Panc1 (cell line): ENCODE measurements at regions of chr11 and their contacts with region 1.

Region 1: DNA sequence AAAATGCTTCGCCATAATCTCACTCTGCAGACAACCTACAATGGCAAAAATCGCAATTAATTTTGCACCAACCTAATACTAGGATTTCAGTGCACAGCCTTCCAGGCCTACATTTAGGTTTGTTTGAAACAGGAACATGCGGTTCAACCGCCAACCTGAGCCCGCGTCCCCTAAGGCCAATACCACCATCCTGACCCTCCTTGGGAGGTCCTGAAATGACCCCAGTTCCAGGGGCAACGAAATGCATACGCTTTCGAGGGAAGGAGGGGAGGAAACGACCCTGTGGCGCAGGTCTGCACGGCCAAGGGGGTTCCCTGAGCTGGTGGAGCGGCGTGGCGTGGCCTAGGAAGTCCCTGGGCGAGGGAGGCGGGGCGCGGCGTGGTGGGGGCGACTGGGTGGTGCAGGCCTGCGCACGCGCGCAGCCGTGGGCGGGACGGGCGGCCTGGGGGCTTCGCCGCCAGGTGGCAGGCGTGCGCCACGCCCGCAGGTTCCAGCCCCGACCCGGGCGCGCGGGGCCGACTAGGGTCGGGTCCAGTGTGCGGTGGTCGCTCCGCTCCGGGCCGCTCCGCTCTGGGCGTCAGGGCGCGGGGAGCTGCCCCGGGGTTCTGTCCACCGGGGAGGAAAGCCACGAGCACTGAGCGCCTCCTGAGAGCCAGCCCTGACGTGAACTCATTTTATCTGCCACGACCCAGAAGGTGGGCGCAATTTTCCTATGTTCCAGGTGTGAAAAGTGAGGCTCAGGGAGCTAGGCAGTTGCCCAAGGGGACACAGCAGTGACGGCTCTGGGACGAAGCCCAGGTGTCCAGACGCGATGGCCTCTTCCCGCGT is 94.1 kb downstream of the SWAP70 start:
- DNase-seq: peak; percentile 38
- ATAC-seq: peak; percentile 66
- H3K4me3 ChIP-seq: peak overlapping the region; percentile 51 to 81
- H3K27ac ChIP-seq: peak overlapping the region; percentile 100
- H3K4me1 ChIP-seq: peaks cover 85% of the 10 kb centered on the region
- H3K27me3 ChIP-seq: no peaks in the 10 kb centered on the region
- CTCF ChIP-seq: peak; percentile 100

Region 2: GRCh38 chr11:9861860-9862725 is 104.1 kb after region 1 on chr11:
- CTCF ChIA-PET with region 1: interaction called, 3 read pairs
- POLR2A ChIA-PET with region 1: no interaction called
- in situ Hi-C with region 1: no loop called
- intact Hi-C with region 1: loop called (anchors 5 kb)
- DNase-seq: peak; percentile 74
- ATAC-seq: peak; percentile 91
- H3K4me3 ChIP-seq: no peak overlapping the region
- H3K27ac ChIP-seq: peak overlapping the region; percentile 96
- H3K4me1 ChIP-seq: peaks cover 56% of the 10 kb centered on the region
- H3K27me3 ChIP-seq: no peaks in the 10 kb centered on the region
- CTCF ChIP-seq: peak; percentile 97

Region 3: DNA sequence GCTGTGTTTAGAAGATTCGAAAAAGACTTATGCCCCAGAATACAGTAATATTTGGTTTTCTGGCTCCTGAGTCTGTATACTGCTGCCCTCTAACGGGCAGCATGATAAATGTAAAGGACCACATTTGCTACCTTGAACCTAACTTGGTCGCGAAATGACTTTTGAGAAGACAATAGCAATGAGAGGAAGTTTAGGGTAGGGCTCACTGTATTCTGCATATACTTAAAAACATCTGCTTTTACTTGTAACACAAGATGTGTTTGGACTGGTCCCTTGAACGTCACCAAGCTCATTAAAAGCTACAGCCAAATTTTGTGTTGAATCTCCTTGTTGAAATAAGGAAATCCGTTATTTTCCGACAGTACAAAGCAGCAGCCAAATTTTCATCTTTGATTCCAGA is 215.0 kb after region 1 on chr11:
- CTCF ChIA-PET with region 1: no interaction called
- POLR2A ChIA-PET with region 1: no interaction called
- in situ Hi-C with region 1: no loop called
- intact Hi-C with region 1: loop called (anchors 5 kb)
- DNase-seq: peak; percentile 53
- ATAC-seq: peak; percentile 72
- H3K4me3 ChIP-seq: no peak overlapping the region
- H3K27ac ChIP-seq: peak overlapping the region; percentile 76
- H3K4me1 ChIP-seq: 0 out of 2 replicates have a peak, but pooled peaks cover 3% of the 10 kb centered on the region
- H3K27me3 ChIP-seq: no peaks in the 10 kb centered on the region
- CTCF ChIP-seq: peak; percentile 85; the same call in 1 of the 2 replicates

Region 4: GRCh38 chr11:10197091-10197490 is 439.1 kb after region 1 on chr11:
- CTCF ChIA-PET with region 1: no interaction called
- POLR2A ChIA-PET with region 1: no interaction called
- in situ Hi-C with region 1: no loop called
- intact Hi-C with region 1: loop called (anchors 10 kb)
- DNase-seq: no peak
- ATAC-seq: no peak
- H3K4me3 ChIP-seq: no peak overlapping the region
- H3K27ac ChIP-seq: no peak overlapping the region
- H3K4me1 ChIP-seq: no peaks in the 10 kb centered on the region
- H3K27me3 ChIP-seq: no peaks in the 10 kb centered on the region
- CTCF ChIP-seq: no peak

Region 5: GRCh38 chr11:10322830-10323792 is 565.1 kb after region 1 on chr11:
- CTCF ChIA-PET with region 1: no interaction called
- POLR2A ChIA-PET with region 1: interaction called, 4 read pairs
- in situ Hi-C with region 1: no loop called
- intact Hi-C with region 1: loop called (anchors 5 kb)
- DNase-seq: peak; percentile 90
- ATAC-seq: peak; percentile 82
- H3K4me3 ChIP-seq: peak overlapping the region in 1 of 2 experiments; percentile 36; a peak in 2 of 4 replicates
- H3K27ac ChIP-seq: peak overlapping the region; percentile 90
- H3K4me1 ChIP-seq: peaks cover 83% of the 10 kb centered on the region
- H3K27me3 ChIP-seq: no peaks in the 10 kb centered on the region
- CTCF ChIP-seq: peak; percentile 83

Region 6: GRCh38 chr11:11291041-11292015 is 1533.3 kb after region 1 on chr11:
- CTCF ChIA-PET with region 1: no interaction called
- POLR2A ChIA-PET with region 1: no interaction called
- in situ Hi-C with region 1: no loop called
- intact Hi-C with region 1: no loop called
- DNase-seq: no peak
- ATAC-seq: no peak
- H3K4me3 ChIP-seq: no peak overlapping the region
- H3K27ac ChIP-seq: no peak overlapping the region
- H3K4me1 ChIP-seq: no peaks in the 10 kb centered on the region; the same call in 1 of the 2 replicates
- H3K27me3 ChIP-seq: 0 out of 2 replicates have a peak, but pooled peaks cover 3% of the 10 kb centered on the region
- CTCF ChIP-seq: no peak